Endothelial cell of umbilical vein (primary cell): ENCODE measurements at regions of chr18 and their contacts with region 1.

Region 1: GRCh38 chr18:7094432-7094831 is 23.2 kb downstream of the LAMA1 start:
- DNase-seq: no peak
- H3K4me3 ChIP-seq: no peak overlapping the region
- H3K27ac ChIP-seq: no peak overlapping the region
- H3K4me1 ChIP-seq: no peaks in the 10 kb centered on the region
- H3K27me3 ChIP-seq: no peaks in the 10 kb centered on the region
- CTCF ChIP-seq: no peak
- POLR2A ChIP-seq: no peak

Region 2: DNA sequence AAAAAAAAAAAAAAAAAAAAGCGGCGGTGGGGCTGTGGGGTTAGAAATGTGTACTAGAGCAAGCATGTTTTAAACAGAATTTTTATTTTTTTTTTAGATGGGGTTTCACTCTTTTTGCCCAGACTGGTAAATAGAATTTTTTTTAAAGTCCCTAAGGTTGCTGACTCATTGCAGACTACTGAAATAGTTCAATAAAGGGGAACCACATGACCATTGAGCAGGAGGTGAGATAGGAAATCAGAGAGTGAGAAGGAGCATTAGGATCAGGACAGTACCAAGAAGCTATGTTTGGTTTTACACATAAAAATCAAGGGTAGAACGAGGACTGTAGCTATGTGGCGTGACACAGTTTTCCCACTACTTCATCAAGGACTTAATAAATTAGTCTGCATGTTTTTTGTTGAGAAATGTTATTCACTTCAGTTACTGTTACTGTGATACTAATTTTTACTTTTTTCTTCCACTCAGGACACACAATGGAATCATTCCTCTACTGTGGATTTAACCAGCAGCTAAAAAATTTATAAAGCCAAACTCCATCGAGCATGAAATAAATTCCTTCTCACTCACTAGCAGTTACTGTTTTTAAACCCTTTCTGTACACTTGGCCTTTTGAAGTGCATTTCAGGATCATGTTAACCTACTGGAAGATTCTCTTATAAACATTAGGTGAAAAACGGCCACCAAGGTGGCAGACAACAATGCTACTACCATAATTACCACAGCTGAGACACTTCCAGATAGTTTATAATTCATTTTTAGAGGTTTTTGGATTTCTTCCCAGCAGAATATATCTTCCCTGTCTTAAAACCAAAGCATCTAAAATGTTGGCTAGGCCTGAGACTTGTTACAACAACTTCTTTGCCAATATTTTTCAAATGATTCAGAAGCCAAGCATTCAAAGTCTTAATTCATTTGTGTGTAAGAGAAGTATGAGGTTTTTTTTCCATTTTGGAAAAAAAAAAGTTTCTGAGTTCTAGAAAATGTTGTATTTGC is 10.1 kb before region 1 on chr18:
- CTCF ChIA-PET with region 1: no interaction called
- POLR2A ChIA-PET with region 1: no interaction called
- dilution Hi-C with region 1: no loop called
- intact Hi-C with region 1: no loop called
- DNase-seq: peak; percentile 6
- H3K4me3 ChIP-seq: no peak overlapping the region
- H3K27ac ChIP-seq: no peak overlapping the region
- H3K4me1 ChIP-seq: no peaks in the 10 kb centered on the region
- H3K27me3 ChIP-seq: no peaks in the 10 kb centered on the region
- CTCF ChIP-seq: no peak
- POLR2A ChIP-seq: no peak

Region 3: GRCh38 chr18:7117390-7118355 is 23.2 kb after region 1 on chr18 and contains the start of gene LAMA1:
- CTCF ChIA-PET with region 1: no interaction called
- POLR2A ChIA-PET with region 1: interaction called, 10 read pairs
- dilution Hi-C with region 1: no loop called
- intact Hi-C with region 1: no loop called
- DNase-seq: no peak
- H3K4me3 ChIP-seq: peak within 1 kb of the TSS in 1 of 3 experiments; percentile 2
- H3K27ac ChIP-seq: no peak within 1 kb of the TSS
- H3K4me1 ChIP-seq: peaks cover 4% of the 10 kb centered on the region
- H3K27me3 ChIP-seq: peaks cover 17 to 39% of the 10 kb centered on the region in 2 experiments
- CTCF ChIP-seq: no peak
- POLR2A ChIP-seq: no peak
- total RNA-seq, gene LAMA1: not detected in 2 replicates